PC-9 (cell line): ENCODE measurements at regions of chr10 and their contacts with region 1.

Region 1: DNA sequence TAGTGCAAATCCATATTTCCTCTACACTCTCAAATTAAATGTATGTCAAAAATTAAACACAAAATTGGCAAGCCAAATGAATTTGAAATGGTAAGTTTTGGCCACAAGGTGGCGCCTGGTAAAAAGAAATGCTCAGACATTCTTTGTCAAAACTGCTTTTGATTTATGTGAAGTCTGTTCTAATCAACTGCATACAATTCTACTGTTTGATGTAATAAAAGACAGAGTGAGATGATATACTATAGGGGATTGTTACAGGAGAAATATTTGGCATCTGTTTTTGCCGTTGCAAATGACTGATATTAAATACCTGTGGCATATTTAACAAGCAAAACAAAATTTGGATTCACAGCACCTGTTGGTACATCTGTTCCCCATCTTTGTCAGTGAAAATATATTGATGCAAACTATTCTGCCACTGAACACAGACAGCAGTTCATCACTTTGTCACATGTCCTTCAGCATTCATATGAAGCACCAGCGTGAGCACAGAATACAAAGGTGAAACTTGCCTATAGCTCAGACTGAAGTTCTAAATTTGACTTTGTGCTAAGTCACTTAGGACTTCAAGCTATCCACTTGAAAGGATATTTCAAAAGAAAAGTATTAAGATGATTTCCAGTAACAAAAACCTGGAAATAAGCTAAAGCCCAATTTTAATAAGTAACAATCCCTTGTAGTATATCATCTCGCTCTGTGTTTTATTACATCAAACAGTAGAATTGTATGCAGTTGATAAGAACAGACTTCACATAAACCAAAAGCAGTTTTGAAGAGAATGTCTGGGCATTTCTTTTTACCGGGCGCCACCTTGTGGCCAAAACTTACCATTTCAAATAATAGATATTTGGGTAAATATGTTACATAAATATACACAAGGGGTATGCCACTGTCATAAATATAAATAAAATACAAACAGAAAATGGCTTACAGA is 10.2 kb upstream of the CH25H start:
- DNase-seq: peak in 1 of 2 experiments; percentile 30
- H3K4me3 ChIP-seq: no peak overlapping the region
- H3K27ac ChIP-seq: peak overlapping the region; percentile 25; the same call in 1 of the 2 replicates
- H3K4me1 ChIP-seq: no peaks in the 10 kb centered on the region
- H3K27me3 ChIP-seq: no peaks in the 10 kb centered on the region
- CTCF ChIP-seq: peak; percentile 79

Region 2: DNA sequence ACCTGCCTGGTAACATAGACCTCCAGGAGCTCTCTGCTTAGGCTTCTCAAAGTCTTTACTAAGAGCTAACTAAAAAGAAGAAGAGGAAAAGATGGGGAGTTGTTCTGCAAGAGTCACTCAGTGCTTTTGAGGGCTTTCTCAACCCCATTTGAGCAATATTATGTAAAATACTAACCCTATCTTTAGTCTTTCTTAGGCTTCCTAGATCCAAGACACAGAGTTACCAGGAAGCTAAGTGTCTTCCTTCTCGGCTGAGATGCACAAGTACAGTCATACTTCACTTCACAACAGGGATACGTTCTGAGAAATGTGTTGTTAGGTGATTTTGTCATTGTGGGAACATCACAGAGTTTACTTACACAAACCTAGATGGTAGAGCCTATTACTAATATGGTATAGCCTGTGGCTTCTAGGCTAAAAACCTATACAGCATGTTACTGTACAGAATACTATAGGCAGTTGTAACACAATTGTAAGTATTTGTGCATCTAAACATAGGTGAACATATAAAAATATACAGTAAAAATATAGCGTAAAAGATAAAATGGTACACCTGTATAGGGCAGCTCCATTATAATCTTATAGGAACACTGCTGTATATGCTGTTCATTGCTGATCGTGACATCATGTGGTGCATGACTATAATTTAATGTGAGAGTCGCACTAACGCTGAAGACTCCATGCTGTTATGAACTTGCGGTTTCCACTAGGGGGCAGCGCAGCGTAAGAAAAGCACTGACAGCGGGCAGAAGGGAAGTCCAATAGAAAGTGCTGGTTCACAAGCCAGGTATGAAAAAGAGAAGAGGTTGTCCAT is 382.0 kb before region 1 on chr10:
- CTCF ChIA-PET with region 1: no interaction called
- POLR2A ChIA-PET with region 1: no interaction called
- intact Hi-C with region 1: loop called (anchors 2 kb)
- DNase-seq: peak; percentile 57 to 65
- H3K4me3 ChIP-seq: no peak overlapping the region
- H3K27ac ChIP-seq: no peak overlapping the region
- H3K4me1 ChIP-seq: no peaks in the 10 kb centered on the region
- H3K27me3 ChIP-seq: no peaks in the 10 kb centered on the region
- CTCF ChIP-seq: peak; percentile 85

Region 3: DNA sequence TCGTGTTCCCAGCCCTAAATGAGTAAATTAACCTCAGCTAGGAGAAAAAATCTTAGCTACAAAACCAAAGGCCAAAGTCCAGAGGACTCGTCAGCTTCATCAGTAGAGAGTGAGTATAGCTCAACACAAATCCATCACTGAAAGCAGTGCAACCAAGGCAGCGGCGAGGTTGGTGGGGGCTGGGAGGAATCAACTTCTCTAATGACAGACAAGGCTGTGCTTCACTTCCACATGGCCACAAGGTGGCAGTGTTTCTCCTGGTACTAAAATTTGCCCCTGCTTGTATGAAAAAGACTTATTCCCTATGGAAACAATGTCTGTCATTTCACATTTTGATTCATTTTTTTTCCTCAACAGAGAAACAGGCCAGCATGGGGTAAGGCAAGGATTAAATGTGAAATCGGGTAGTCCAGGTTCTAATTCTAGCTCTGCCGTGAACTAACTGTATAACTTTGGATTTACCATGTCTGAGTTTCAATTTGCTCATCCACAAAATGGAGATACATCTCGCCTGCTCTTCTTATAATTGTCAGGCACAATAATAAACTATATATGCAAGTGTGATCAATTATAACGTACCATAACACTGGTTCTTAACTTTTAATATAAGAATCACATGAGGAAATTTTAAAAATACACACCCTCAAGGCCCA is 187.4 kb before region 1 on chr10:
- CTCF ChIA-PET with region 1: interaction called, 11 read pairs
- POLR2A ChIA-PET with region 1: no interaction called
- intact Hi-C with region 1: loop called (anchors 1 kb)
- DNase-seq: peak in 1 of 2 experiments; percentile 42
- H3K4me3 ChIP-seq: no peak overlapping the region
- H3K27ac ChIP-seq: no peak overlapping the region
- H3K4me1 ChIP-seq: peaks cover 40% of the 10 kb centered on the region
- H3K27me3 ChIP-seq: no peaks in the 10 kb centered on the region
- CTCF ChIP-seq: peak; percentile 79

Region 4: DNA sequence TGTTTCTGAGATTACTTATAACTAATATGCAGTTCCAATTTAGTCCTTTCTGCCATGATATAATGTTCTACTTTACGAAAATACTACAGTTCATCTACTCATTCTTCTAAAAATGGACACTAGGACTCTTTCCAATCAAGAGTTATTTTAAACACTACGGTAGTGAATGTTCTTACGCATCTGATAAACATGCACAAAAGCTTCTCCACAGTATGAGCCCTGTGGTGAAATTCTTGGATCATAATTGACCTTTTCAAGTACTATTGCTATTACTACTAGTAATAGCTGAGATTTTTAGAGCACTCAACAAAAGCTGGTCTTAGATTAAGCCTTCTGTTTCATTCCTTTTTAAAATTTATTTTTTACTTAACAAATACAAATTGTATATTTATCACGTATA is 116.6 kb before region 1 on chr10:
- CTCF ChIA-PET with region 1: no interaction called
- POLR2A ChIA-PET with region 1: no interaction called
- intact Hi-C with region 1: no loop called
- DNase-seq: no peak
- H3K4me3 ChIP-seq: no peak overlapping the region
- H3K27ac ChIP-seq: no peak overlapping the region
- H3K4me1 ChIP-seq: no peaks in the 10 kb centered on the region
- H3K27me3 ChIP-seq: no peaks in the 10 kb centered on the region
- CTCF ChIP-seq: no peak

Region 5: GRCh38 chr10:89391917-89392756 is 174.8 kb after region 1 on chr10 and contains the start of gene IFIT1:
- CTCF ChIA-PET with region 1: no interaction called
- POLR2A ChIA-PET with region 1: no interaction called
- intact Hi-C with region 1: loop called (anchors 1 kb)
- DNase-seq: peak in 1 of 2 experiments; percentile 60
- H3K4me3 ChIP-seq: peak within 1 kb of the TSS; percentile 56
- H3K27ac ChIP-seq: peak within 1 kb of the TSS; percentile 61
- H3K4me1 ChIP-seq: peaks cover 7% of the 10 kb centered on the region
- H3K27me3 ChIP-seq: no peaks in the 10 kb centered on the region
- CTCF ChIP-seq: no peak
- total RNA-seq, gene IFIT1: 3.4 TPM in 2 replicates